PC-3 (cell line): ENCODE measurements at regions of chr4 and their contacts with region 1.

Region 1: DNA sequence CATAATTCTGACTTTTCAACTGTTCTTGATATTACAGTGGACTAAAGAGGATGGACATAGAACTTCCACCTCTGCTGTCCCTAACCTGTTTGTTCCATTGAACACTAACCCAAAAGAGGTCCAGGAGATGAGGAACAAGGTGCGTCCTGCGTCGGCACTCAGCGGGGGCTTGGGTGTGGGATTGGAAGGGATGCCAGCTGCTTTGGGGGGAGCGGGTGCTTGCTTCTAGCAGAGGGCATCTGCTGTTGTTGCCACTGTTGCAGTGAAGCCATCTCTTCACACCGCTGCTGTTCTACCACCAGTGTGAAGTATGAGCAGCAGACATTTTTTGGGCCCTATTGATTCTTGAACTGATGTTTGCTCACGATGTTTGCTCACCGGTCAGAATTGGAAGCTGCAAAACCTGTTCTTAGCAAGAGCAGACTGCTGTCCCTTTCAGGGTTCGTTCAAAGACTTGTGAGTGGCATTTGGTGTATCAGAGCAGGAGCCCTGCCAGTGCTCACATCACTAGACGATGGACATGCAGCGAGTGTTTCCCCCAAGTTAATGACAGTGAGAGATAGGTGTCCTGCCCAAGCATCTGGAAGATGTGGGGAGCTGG is 55.4 kb downstream of the NOP14 start:
- DNase-seq: peak; percentile 68
- ATAC-seq: peak; percentile 56; the same call in 1 of the 2 replicates
- H3K4me3 ChIP-seq: no peak overlapping the region
- H3K27ac ChIP-seq: no peak overlapping the region
- H3K4me1 ChIP-seq: peaks cover 13% of the 10 kb centered on the region
- H3K27me3 ChIP-seq: no peaks in the 10 kb centered on the region
- CTCF ChIP-seq: no peak

Region 2: GRCh38 chr4:2843263-2843940 is 64.4 kb before region 1 on chr4 and contains the start of gene ADD1:
- CTCF ChIA-PET with region 1: no interaction called
- POLR2A ChIA-PET with region 1: no interaction called
- intact Hi-C with region 1: loop called (anchors 10 kb)
- DNase-seq: peak; percentile 91
- ATAC-seq: peak; percentile 81
- H3K4me3 ChIP-seq: peak within 1 kb of the TSS; percentile 97
- H3K27ac ChIP-seq: no peak within 1 kb of the TSS
- H3K4me1 ChIP-seq: peaks cover 14% of the 10 kb centered on the region
- H3K27me3 ChIP-seq: no peaks in the 10 kb centered on the region
- CTCF ChIP-seq: no peak
- total RNA-seq, gene ADD1: 118 and 124 TPM in 2 replicates

Region 3: DNA sequence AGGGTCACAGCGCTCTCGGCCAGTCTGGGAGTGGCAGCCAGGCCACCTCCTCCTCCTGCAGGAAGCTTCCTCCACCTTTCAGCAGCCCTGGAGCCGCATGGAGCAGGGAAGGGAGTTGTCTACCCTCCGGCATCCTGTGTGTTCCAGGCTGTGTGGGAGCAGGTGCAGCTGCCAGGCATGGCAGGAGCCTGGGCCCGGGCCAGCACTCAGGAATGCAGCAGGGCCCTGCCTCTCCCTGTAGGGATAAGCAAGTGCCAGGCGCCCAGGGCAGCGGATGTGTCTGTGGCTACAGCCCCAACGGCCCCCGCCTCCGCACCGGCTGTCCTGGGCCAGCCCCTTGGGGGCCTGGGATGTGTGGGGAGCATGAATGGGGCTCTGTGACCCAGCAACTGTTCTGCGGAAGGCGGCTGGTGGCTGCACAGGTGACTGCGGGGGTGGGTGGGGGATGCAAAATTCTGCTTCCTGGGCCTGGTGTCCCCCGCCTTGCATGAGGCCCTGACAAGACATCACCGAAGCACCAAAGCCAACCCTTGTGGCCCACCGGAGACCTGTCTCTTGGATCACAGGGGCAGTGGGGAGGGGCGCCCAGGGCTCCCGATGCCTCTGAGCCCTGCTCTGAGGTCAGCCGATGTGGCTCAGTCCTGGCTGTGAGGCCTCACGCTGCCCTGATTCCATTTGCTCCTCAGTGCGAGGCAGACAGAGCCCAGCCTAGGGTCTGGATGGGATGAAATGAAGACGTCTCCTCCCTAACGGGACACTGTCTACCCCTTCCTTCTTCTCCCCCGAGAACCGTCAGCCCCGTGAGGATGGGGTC is 553.9 kb after region 1 on chr4:
- CTCF ChIA-PET with region 1: no interaction called
- POLR2A ChIA-PET with region 1: no interaction called
- intact Hi-C with region 1: no loop called
- DNase-seq: peak; percentile 83
- ATAC-seq: peak; percentile 93
- H3K4me3 ChIP-seq: no peak overlapping the region
- H3K27ac ChIP-seq: no peak overlapping the region
- H3K4me1 ChIP-seq: peaks cover 11% of the 10 kb centered on the region; the same call in 1 of the 2 replicates
- H3K27me3 ChIP-seq: no peaks in the 10 kb centered on the region
- CTCF ChIP-seq: no peak